Activated naive CD4-positive, alpha-beta T cell treated with anti-CD3 and anti-CD28 coated beads for 36 hours (primary cell): ENCODE measurements at regions of chr10 and their contacts with region 1.

Region 1: DNA sequence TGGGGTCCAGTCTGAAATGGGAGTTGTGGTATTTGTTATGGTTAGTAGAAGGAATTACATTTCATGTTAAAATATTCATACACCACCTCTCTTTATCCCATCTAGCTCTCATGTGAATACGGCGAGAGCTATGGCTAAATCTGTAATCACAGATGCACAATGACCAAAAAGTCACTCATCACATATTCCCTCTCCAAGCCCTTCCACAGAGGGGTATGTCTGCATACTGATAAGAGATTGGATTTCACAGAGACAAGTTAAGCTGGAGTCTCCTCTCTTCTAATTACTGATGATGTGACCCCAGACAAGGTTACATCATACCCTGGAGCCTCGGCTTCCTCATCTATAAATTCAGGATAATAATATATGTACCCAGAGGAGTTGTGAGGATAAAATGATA is 237.8 kb upstream of the RHOBTB1 start:
- DNase-seq: no peak
- H3K4me3 Mint-ChIP-seq: no peak overlapping the region
- H3K27ac Mint-ChIP-seq: no peak overlapping the region
- H3K4me1 Mint-ChIP-seq: no peaks in the 10 kb centered on the region
- H3K27me3 Mint-ChIP-seq: peaks cover 3% of the 10 kb centered on the region

Region 2: DNA sequence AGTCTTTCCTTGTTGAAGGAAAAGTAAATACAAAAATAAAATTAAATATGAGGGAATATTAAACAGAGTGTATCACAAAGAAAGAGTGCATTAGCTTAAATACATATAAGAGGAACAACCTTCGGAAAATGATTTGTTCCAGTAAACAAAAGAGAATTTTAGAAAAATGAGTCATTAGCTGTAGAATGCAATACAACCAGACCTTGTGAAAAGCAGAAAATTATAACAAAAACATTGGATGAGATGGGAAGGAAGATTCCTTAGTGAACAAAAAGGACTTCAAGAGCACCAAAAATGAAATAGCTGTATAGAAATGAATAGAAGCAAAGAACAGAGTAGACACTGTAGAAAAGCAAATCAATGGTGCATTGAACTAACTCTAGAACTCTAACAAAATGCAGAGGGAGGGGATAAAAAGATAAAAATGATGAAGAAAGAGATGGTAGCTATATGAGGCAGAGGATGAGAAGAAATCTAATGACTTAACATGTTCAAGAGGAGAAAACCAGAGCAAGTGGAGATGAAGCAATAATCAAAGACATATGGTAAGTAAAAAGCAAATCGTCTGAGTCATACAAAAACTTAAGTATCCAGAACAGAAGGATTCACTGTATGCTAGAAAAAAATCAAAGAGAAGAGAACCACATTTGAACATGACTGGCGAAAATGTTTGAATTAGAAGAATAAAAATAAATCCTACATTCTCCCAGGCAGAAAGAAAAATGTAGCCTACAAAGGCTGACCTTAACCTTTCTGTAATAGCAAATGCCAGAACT is 80.8 kb after region 1 on chr10:
- CTCF ChIA-PET with region 1: no interaction called
- intact Hi-C with region 1: loop called (anchors 1 kb)
- DNase-seq: no peak
- H3K4me3 Mint-ChIP-seq: no peak overlapping the region
- H3K27ac Mint-ChIP-seq: no peak overlapping the region
- H3K4me1 Mint-ChIP-seq: no peaks in the 10 kb centered on the region
- H3K27me3 Mint-ChIP-seq: peaks cover 10% of the 10 kb centered on the region